ENCODE measurements at regions of chr11 and their contacts with region 1.

Region 1: DNA sequence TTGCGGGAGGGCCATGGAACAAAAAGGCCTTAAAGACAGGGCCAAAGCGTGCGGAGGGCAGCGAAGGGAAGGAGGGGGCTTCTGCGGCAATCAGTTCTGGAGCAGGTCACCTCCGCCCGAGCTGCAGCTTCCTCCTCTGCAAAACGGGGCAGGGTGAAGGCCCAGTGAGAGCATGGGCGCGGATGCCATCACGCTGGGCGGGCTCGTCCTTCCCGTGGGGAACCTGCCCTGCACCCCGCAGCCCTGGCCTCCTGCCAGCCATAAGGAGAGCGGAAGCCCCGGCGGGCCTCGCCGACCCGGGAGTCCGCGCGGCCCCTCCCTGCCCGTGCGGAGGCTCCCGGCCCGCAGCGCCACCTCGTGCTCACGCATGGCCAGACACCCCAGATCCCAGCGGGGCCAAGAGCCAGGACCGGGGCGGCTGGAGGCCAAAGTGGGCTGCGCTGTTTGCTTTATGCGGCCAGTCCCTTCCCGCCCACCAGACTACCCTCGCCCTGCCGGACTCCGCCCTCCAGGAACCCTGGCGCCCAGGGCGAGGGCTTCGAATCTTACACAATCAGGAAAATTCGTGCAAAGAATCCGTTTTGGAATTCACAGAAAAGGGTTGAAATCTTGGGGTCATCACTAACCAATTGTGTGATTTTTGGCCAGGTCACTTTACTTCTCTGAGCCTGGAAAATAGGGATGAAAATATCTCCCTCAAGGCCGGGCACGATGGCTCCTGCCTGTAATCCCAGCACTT is 16.1 kb downstream of the TSKU start:
- DNase-seq: peak; percentile 90 to 95 (median 93)
- ATAC-seq: peak; percentile 36 to 79 (median 75)
- H3K4me3 ChIP-seq: peak overlapping the region; percentile 17 to 21 (median 19)
- H3K27ac ChIP-seq: peak overlapping the region in 2 of 3 donors; percentile 64 to 100
- H3K4me1 ChIP-seq: peaks cover 0 to 72% (median 33%) of the 10 kb centered on the region in 4 donors
- H3K27me3 ChIP-seq: no peaks in the 10 kb centered on the region
- CTCF ChIP-seq: peak; percentile 91 to 96 (median 94)
- POLR2A ChIP-seq: no peak

Region 2: DNA sequence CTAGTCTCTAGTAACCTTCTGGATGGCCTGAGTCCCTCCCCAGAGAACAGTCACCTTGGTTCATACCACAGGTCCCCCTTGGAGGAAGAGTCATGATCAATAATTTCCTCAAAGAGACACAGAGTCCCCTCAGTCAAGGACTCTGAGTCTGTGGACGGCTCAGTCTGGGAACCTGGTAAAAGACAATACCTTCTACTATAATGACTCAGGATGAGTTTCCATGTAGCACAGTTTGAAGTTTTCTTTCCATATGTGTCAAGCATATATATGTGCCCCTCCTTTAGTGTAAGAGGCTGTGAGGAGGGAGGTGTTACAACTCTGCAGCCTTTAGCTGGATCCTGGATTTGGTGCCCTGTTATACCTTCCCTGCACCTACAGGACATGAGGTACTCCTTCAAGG is 70.5 kb before region 1 on chr11:
- intact Hi-C with region 1: loop called in 1 of 2 experiments (anchors 5 kb)
- DNase-seq: no peak
- ATAC-seq: no peak
- H3K4me3 ChIP-seq: no peak overlapping the region
- H3K27ac ChIP-seq: no peak overlapping the region
- H3K4me1 ChIP-seq: peaks cover 0 to 14% (median 0%) of the 10 kb centered on the region in 4 donors
- H3K27me3 ChIP-seq: no peaks in the 10 kb centered on the region
- CTCF ChIP-seq: no peak
- POLR2A ChIP-seq: no peak

Region 3: DNA sequence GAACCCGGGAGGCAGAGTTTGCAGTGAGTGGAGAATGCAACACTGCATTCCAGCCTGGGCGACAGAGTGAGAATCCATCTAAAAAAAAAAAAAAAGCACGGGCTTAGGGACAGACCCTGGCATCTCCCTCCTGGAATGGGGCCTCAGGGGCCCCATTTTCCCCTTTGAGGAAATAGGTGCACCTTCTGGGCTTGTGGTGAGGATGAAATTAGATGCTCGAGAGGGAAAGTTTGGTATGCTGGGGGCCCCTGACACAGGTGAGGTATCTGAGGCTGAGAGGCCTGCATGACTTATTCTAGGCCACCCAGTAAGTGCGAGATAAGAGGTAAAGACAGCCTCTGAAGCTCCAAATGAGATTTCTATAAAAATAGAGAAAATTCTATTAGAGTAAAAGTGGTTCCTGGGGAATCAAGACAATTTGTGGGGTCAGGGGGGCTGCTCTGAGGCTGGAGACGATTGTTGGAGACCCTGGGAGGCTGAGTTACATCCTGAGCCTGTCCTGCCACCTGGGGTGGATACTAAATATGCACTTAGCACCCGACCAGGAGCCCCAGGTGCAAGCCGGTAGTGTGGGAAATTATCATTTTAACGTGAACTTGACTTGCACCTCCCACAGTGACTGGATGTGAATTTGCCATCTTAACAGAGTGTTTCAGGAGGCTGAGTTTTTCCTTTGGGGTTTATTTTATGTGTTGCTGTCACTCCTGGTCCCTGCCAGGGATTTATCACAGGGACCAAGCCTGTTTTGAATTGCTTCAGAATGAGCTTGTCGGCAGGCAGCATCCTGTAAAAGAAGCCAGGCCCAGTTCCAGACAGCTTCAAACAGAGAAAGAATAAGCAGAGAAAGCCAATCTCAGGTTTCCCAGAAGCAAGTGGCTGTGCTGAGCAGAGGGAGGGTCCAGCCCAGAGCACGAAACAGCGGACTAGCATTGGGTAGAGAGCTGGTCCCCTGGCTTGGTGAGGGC is 64.5 kb before region 1 on chr11:
- intact Hi-C with region 1: loop called (anchors 5 kb)
- DNase-seq: no peak
- ATAC-seq: no peak
- H3K4me3 ChIP-seq: no peak overlapping the region
- H3K27ac ChIP-seq: no peak overlapping the region
- H3K4me1 ChIP-seq: peaks cover 0 to 16% (median 0%) of the 10 kb centered on the region in 4 donors
- H3K27me3 ChIP-seq: no peaks in the 10 kb centered on the region
- CTCF ChIP-seq: no peak
- POLR2A ChIP-seq: no peak

Measured in right lobe of liver (tissue), 6 donors.